Vagina (tissue), 2 donors: ENCODE measurements at regions of chr19 and their contacts with region 1.

Region 1: GRCh38 chr19:49850473-49851342 is at the start of gene PTOV1:
- DNase-seq: no peak
- H3K4me3 ChIP-seq: peak within 1 kb of the TSS; percentile 83 to 93
- H3K27ac ChIP-seq: peak within 1 kb of the TSS; percentile 100
- H3K4me1 ChIP-seq: peaks cover 36% of the 10 kb centered on the region
- H3K27me3 ChIP-seq: no peaks in the 10 kb centered on the region
- CTCF ChIP-seq: no peak
- POLR2A ChIP-seq: peak in 1 of 2 donors; percentile 50
- total RNA-seq, gene PTOV1: 109 TPM

Region 2: GRCh38 chr19:49758292-49758691 is 92.4 kb before region 1 on chr19:
- intact Hi-C with region 1: loop called (anchors 10 kb)
- DNase-seq: no peak
- H3K4me3 ChIP-seq: no peak overlapping the region
- H3K27ac ChIP-seq: no peak overlapping the region
- H3K4me1 ChIP-seq: no peaks in the 10 kb centered on the region
- H3K27me3 ChIP-seq: no peaks in the 10 kb centered on the region
- CTCF ChIP-seq: no peak
- POLR2A ChIP-seq: no peak

Region 3: GRCh38 chr19:49779731-49780589 is 70.7 kb before region 1 on chr19:
- intact Hi-C with region 1: loop called (anchors 10 kb)
- DNase-seq: no peak
- H3K4me3 ChIP-seq: no peak overlapping the region
- H3K27ac ChIP-seq: no peak overlapping the region
- H3K4me1 ChIP-seq: peaks cover 6% of the 10 kb centered on the region
- H3K27me3 ChIP-seq: no peaks in the 10 kb centered on the region
- CTCF ChIP-seq: no peak
- POLR2A ChIP-seq: no peak

Region 4: DNA sequence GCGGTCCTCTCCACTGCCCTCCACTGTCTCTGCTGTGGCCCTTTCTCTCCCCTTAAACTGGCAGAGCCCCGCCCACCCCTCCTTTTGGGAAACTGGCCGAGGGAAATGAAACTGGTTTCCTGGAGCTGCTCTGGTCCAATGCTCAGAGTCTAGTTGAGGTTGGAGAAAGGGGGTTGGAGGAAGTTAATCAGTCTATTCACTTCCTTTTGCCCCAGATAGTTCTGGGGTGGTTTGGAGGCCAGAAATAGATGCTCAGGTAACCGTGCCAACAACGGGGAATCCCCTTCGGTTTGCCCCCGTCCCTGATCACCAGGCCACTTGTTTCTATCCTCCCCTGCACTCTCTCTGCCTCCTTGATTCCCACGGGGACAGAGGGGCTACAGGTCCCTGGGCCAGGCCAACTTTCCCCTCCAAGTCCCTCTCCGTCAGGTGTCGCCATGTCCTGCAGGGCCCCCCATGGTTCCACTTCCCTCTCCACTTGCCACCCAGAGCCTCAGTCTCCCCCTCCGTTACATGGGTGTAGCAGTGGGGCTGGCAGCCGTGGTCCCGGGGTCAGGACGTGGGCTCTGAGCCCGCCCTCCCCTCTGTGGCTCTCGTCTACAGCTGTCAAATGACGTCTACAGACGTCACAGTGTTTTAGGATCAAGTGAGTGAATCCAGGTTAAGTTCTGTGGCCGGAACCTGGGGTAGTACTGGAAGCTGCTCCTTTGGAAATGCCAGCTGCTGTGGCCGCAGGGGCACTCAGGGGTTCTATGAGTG is 46.3 kb after region 1 on chr19 and contains the start of gene IL4I1:
- intact Hi-C with region 1: no loop called
- DNase-seq: no peak
- H3K4me3 ChIP-seq: peak within 1 kb of the TSS in 1 of 2 donors; percentile 4
- H3K27ac ChIP-seq: peak within 1 kb of the TSS; percentile 87
- H3K4me1 ChIP-seq: peaks cover 26% of the 10 kb centered on the region
- H3K27me3 ChIP-seq: no peaks in the 10 kb centered on the region
- CTCF ChIP-seq: no peak
- POLR2A ChIP-seq: no peak
- total RNA-seq, gene IL4I1: not detected